Common myeloid progenitor, CD34-positive (primary cell): ENCODE measurements at regions of chr19 and their contacts with region 1.

Region 1: DNA sequence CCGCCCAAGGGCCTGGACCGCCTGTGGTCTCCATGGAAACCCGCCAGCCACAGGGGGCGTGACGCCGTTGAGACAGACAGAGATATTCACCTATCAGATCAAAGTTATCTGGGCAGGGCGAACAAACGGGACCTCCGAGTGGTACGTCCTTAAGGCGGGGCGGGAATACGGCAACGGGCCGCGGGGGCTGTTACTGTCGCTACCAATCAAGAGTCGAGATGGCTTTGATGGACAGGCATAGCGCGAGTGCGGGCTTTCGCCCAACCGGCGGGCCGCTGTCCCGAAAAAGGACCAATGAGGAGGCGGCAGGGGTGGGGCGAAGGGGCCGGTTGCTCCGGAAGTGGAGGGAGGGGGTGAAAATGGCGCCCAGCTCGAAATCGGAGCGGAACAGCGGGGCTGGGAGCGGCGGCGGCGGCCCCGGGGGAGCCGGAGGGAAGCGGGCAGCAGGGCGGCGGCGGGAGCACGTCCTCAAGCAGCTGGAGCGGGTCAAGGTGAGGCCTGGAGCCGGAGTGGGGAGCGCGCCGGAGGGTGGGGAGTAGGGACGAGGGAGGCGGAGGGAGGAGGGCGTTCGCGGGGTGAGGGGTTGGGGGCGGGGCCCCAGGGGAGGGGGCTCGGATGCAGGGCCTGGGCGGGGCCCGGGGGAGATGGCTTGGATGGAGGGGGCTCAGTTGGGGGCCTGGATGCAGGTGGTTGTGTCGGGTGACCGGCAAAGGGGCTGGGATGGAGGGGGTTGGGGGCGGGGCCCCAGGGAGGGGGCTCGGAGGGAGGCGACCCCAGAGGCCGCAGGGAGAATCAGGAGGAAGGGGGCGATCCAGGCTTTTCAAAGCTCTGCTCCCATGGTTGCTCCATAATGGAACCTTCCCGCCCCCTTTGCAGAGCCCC is at the start of gene DCAF15:
- DNase-seq: peak; percentile 100
- H3K4me3 ChIP-seq: peak within 1 kb of the TSS; percentile 69 to 91 (median 81)
- H3K27ac ChIP-seq: peak within 1 kb of the TSS; percentile 79 to 87
- H3K4me1 ChIP-seq: peaks cover 0 to 16% (median 13%) of the 10 kb centered on the region in 4 experiments
- H3K27me3 ChIP-seq: no peaks in the 10 kb centered on the region

Region 2: GRCh38 chr19:13731147-13731964 is 221.0 kb before region 1 on chr19:
- CTCF ChIA-PET with region 1: no interaction called
- POLR2A ChIA-PET with region 1: no interaction called
- DNase-seq: peak; percentile 92 to 95 (median 95)
- H3K4me3 ChIP-seq: peak overlapping the region; percentile 37 to 88 (median 76)
- H3K27ac ChIP-seq: peak overlapping the region; percentile 88 to 96
- H3K4me1 ChIP-seq: peaks cover 12 to 38% (median 28%) of the 10 kb centered on the region in 4 experiments
- H3K27me3 ChIP-seq: no peaks in the 10 kb centered on the region

Region 3: GRCh38 chr19:13917888-13918406 is 34.4 kb before region 1 on chr19:
- CTCF ChIA-PET with region 1: no interaction called
- POLR2A ChIA-PET with region 1: no interaction called
- DNase-seq: no peak
- H3K4me3 ChIP-seq: no peak overlapping the region
- H3K27ac ChIP-seq: no peak overlapping the region
- H3K4me1 ChIP-seq: no peaks in the 10 kb centered on the region
- H3K27me3 ChIP-seq: no peaks in the 10 kb centered on the region

Region 4: DNA sequence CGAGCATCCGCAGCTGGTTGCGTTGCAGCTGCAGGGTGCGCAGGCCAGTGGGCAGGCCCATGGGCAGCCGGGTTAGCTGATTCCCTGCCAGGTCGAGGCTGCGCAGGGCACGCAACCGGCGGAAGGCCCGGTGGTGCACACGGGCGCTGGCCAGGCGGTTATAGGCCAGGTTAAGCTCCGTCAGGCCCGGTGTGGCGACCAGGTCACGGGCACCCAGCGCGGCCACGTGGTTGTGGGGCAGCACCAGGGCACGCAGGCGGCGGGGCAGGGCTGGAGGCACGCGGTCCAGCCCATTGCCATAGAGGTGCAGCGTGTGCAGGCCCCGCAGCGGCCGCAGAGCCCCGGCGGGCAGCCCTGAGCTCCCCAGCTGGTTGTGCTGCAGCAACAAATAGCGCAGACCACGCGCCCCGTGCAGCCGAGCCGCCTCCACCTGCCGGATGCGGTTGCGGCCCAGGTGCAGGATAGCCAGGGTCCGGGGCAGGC is 19.4 kb before region 1 on chr19:
- CTCF ChIA-PET with region 1: no interaction called
- POLR2A ChIA-PET with region 1: no interaction called
- DNase-seq: no peak
- H3K4me3 ChIP-seq: no peak overlapping the region
- H3K27ac ChIP-seq: no peak overlapping the region
- H3K4me1 ChIP-seq: peaks cover 0 to 23% (median 6%) of the 10 kb centered on the region in 4 experiments
- H3K27me3 ChIP-seq: peaks cover 0 to 6% (median 2%) of the 10 kb centered on the region in 5 experiments

Region 5: GRCh38 chr19:13978347-13978733 is 25.9 kb after region 1 on chr19:
- CTCF ChIA-PET with region 1: interaction called, 10 read pairs
- POLR2A ChIA-PET with region 1: interaction called, 4 read pairs
- DNase-seq: peak; percentile 57 to 78 (median 76)
- H3K4me3 ChIP-seq: peak overlapping the region in 3 of 7 experiments; percentile 61 to 76 (median 69)
- H3K27ac ChIP-seq: peak overlapping the region in 1 of 2 experiments; percentile 43
- H3K4me1 ChIP-seq: peaks cover 0 to 55% (median 48%) of the 10 kb centered on the region in 4 experiments
- H3K27me3 ChIP-seq: no peaks in the 10 kb centered on the region

Region 6: GRCh38 chr19:14000686-14001623 is 48.6 kb after region 1 on chr19:
- CTCF ChIA-PET with region 1: interaction called, 10 read pairs
- POLR2A ChIA-PET with region 1: interaction called, 3 read pairs
- DNase-seq: no peak
- H3K4me3 ChIP-seq: no peak overlapping the region
- H3K27ac ChIP-seq: peak overlapping the region in 1 of 2 experiments; percentile 58
- H3K4me1 ChIP-seq: peaks cover 15 to 49% (median 46%) of the 10 kb centered on the region in 4 experiments
- H3K27me3 ChIP-seq: no peaks in the 10 kb centered on the region